Natural killer cell (primary cell): ENCODE measurements at regions of chr22 and their contacts with region 1.

Region 1: GRCh38 chr22:45163451-45164269 is at the start of gene NUP50:
- DNase-seq: peak; percentile 95 to 100
- ATAC-seq: peak; percentile 88 to 93 (median 89)
- H3K4me3 ChIP-seq: peak within 1 kb of the TSS; percentile 73
- H3K4me3 Mint-ChIP-seq: peak within 1 kb of the TSS; percentile 96
- H3K27ac ChIP-seq: peak within 1 kb of the TSS; percentile 78
- H3K27ac Mint-ChIP-seq: peak within 1 kb of the TSS; percentile 87 to 91
- H3K4me1 ChIP-seq: peaks cover 27% of the 10 kb centered on the region
- H3K4me1 Mint-ChIP-seq: peaks cover 47 to 51% of the 10 kb centered on the region in 2 donors
- H3K27me3 ChIP-seq: no peaks in the 10 kb centered on the region
- H3K27me3 Mint-ChIP-seq: no peaks in the 10 kb centered on the region
- CTCF ChIP-seq: no peak
- total RNA-seq, gene NUP50: 63.9 to 99.4 (median 98.6) TPM

Region 2: DNA sequence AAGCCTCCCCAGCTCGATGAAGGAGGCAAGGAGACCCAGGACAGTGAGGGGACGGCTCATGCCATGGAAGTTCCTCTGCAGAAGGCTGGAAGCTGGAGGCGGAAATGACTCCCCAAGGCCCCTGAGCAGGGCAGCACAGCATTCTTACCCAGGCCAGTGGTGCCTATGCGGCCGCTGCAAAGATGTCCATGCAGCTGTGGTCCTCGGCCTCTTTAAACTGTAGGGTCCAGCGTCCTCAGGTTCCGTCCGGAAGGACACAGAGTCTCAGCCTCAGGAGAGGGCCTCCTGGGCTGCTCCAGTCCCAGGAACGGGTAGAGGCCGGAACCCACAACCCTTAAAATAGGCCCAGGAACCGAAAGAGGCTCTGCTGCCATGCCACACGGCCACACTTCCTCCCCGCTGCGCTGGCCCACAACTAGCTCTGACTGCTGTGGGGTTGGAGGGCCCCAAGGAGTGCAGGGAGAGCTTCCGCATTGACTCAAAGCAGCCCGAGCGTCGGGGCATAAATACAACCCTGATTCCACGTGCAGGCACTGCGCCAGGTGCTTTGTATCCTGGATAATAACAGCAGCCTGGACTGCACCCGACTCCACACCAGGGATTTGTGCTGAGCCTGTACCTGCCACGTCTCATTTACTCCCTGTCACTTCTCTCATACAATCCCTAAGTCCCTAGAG is 71.6 kb after region 1 on chr22:
- intact Hi-C with region 1: loop called (anchors 10 kb)
- DNase-seq: peak in 1 of 2 donors; percentile 60
- ATAC-seq: peak; percentile 35 to 88 (median 78)
- H3K4me3 ChIP-seq: peak overlapping the region; percentile 21
- H3K4me3 Mint-ChIP-seq: peak overlapping the region; percentile 63
- H3K27ac ChIP-seq: peak overlapping the region; percentile 65
- H3K27ac Mint-ChIP-seq: peak overlapping the region in 1 of 2 donors; percentile 81
- H3K4me1 ChIP-seq: peaks cover 71% of the 10 kb centered on the region
- H3K4me1 Mint-ChIP-seq: peaks cover 37 to 63% of the 10 kb centered on the region in 2 donors
- H3K27me3 ChIP-seq: no peaks in the 10 kb centered on the region
- H3K27me3 Mint-ChIP-seq: no peaks in the 10 kb centered on the region
- CTCF ChIP-seq: no peak

Region 3: GRCh38 chr22:45358127-45358526 is 194.5 kb after region 1 on chr22:
- intact Hi-C with region 1: no loop called
- DNase-seq: no peak
- ATAC-seq: no peak
- H3K4me3 ChIP-seq: no peak overlapping the region
- H3K4me3 Mint-ChIP-seq: no peak overlapping the region
- H3K27ac ChIP-seq: no peak overlapping the region
- H3K27ac Mint-ChIP-seq: no peak overlapping the region
- H3K4me1 ChIP-seq: no peaks in the 10 kb centered on the region
- H3K4me1 Mint-ChIP-seq: no peaks in the 10 kb centered on the region
- H3K27me3 ChIP-seq: no peaks in the 10 kb centered on the region
- H3K27me3 Mint-ChIP-seq: no peaks in the 10 kb centered on the region
- CTCF ChIP-seq: no peak